Activated CD4-positive, alpha-beta T cell treated with anti-CD3 and anti-CD28 coated beads for 36 hours (primary cell): ENCODE measurements at regions of chr9 and their contacts with region 1.

Region 1: GRCh38 chr9:122350638-122351355 is 20.0 kb upstream of the PTGS1 start:
- DNase-seq: peak; percentile 89
- ATAC-seq: peak; percentile 90
- H3K4me3 Mint-ChIP-seq: no peak overlapping the region
- H3K27ac Mint-ChIP-seq: no peak overlapping the region
- H3K4me1 Mint-ChIP-seq: peaks cover 7% of the 10 kb centered on the region
- H3K27me3 Mint-ChIP-seq: peaks cover 26% of the 10 kb centered on the region

Region 2: DNA sequence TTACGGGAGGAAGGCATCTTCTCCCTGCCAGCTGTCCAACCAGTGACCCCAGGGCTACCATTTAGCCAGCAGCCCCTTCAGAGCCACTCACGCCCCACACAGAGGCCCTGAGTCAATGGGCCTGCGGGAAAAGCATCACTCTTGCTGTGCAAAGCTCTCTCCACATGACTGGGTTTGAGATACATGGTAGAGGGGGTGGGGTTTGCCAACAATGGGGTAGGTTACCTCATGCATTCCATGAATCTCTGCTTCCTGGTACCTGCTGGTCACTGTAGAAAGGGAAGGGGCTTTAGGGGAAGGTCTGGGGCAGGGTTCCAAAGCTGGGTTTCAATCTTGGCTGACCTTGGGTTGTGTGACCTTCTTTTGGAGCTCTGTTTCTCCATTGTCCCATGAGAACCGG is 234.8 kb before region 1 on chr9:
- CTCF ChIA-PET with region 1: interaction called, 20 read pairs
- POLR2A ChIA-PET with region 1: no interaction called
- intact Hi-C with region 1: no loop called
- DNase-seq: no peak
- ATAC-seq: no peak
- H3K4me3 Mint-ChIP-seq: no peak overlapping the region
- H3K27ac Mint-ChIP-seq: no peak overlapping the region
- H3K4me1 Mint-ChIP-seq: no peaks in the 10 kb centered on the region
- H3K27me3 Mint-ChIP-seq: peaks cover 2% of the 10 kb centered on the region

Region 3: GRCh38 chr9:122338994-122339393 is 11.8 kb before region 1 on chr9:
- CTCF ChIA-PET with region 1: interaction called, 12 read pairs
- POLR2A ChIA-PET with region 1: no interaction called
- intact Hi-C with region 1: no loop called
- DNase-seq: no peak
- ATAC-seq: no peak
- H3K4me3 Mint-ChIP-seq: no peak overlapping the region
- H3K27ac Mint-ChIP-seq: no peak overlapping the region
- H3K4me1 Mint-ChIP-seq: no peaks in the 10 kb centered on the region
- H3K27me3 Mint-ChIP-seq: peaks cover 3% of the 10 kb centered on the region

Region 4: GRCh38 chr9:122360891-122361290 is 10.1 kb after region 1 on chr9:
- CTCF ChIA-PET with region 1: interaction called, 10 read pairs
- POLR2A ChIA-PET with region 1: no interaction called
- intact Hi-C with region 1: no loop called
- DNase-seq: peak; percentile 12
- ATAC-seq: peak; percentile 23
- H3K4me3 Mint-ChIP-seq: no peak overlapping the region
- H3K27ac Mint-ChIP-seq: no peak overlapping the region
- H3K4me1 Mint-ChIP-seq: no peaks in the 10 kb centered on the region
- H3K27me3 Mint-ChIP-seq: peaks cover 5% of the 10 kb centered on the region

Region 5: DNA sequence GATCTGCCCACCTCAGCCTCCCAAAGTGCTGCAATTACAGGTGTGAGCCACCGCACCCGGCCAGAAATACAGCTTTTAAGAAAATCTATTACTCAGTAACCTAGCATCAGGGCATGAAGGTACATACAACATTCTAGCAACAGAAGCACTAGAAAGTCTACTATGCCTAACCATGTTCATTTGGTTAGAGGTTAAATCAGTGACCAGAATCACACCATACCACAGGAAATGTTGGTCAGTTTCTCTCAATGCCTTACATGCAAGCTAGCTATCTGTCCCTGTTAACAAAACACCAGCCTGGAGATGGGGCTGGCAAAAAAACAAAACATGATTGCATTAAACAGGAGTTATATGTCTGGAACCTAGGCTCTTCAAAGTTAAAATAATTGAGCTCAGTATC is 813.5 kb after region 1 on chr9:
- CTCF ChIA-PET with region 1: no interaction called
- POLR2A ChIA-PET with region 1: no interaction called
- intact Hi-C with region 1: no loop called
- DNase-seq: no peak
- ATAC-seq: no peak
- H3K4me3 Mint-ChIP-seq: no peak overlapping the region
- H3K27ac Mint-ChIP-seq: no peak overlapping the region
- H3K4me1 Mint-ChIP-seq: peaks cover 4% of the 10 kb centered on the region
- H3K27me3 Mint-ChIP-seq: no peaks in the 10 kb centered on the region

Region 6: GRCh38 chr9:123278361-123278760 is 927.6 kb after region 1 on chr9:
- CTCF ChIA-PET with region 1: no interaction called
- POLR2A ChIA-PET with region 1: no interaction called
- intact Hi-C with region 1: no loop called
- DNase-seq: no peak
- ATAC-seq: no peak
- H3K4me3 Mint-ChIP-seq: no peak overlapping the region
- H3K27ac Mint-ChIP-seq: no peak overlapping the region
- H3K4me1 Mint-ChIP-seq: peaks cover 5% of the 10 kb centered on the region
- H3K27me3 Mint-ChIP-seq: no peaks in the 10 kb centered on the region

Region 7: GRCh38 chr9:124357721-124358361 is 2007.0 kb after region 1 on chr9:
- CTCF ChIA-PET with region 1: no interaction called
- POLR2A ChIA-PET with region 1: no interaction called
- intact Hi-C with region 1: no loop called
- DNase-seq: no peak
- ATAC-seq: no peak
- H3K4me3 Mint-ChIP-seq: no peak overlapping the region
- H3K27ac Mint-ChIP-seq: no peak overlapping the region
- H3K4me1 Mint-ChIP-seq: peaks cover 38% of the 10 kb centered on the region
- H3K27me3 Mint-ChIP-seq: no peaks in the 10 kb centered on the region